Mammary epithelial cell (primary cell): ENCODE measurements at regions of chr2 and their contacts with region 1.

Region 1: DNA sequence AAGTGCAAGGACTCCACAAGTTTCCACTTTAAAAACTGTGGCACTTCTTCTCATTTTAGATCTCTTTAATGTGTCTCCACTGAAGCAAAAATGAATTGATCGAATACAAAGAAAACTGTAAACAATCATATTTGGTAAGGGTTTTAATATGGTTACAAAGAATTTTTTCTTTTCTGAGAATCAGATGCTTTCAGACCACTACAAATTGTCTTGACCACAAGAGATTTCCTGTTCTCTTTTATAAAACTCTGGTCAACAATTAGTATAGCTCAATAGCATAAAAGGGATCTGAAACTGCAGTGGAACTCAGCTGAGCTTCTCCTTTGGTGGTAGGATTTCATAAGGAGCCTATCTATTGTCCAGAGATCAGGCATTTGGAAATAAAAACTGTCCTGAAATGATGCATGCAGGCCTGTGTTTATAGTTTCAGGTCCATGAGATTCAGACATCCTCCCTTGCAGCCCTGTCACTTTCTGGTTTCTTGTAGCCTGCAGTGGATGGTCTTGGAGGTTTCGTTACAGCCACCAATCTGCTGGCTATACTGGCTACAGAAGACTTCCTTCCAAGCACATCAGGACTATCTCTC is 120.0 kb downstream of the DOCK10 start:
- DNase-seq: no peak
- H3K4me3 ChIP-seq: no peak overlapping the region
- H3K27ac ChIP-seq: no peak overlapping the region
- H3K4me1 ChIP-seq: peaks cover 7% of the 10 kb centered on the region
- H3K27me3 ChIP-seq: no peaks in the 10 kb centered on the region
- CTCF ChIP-seq: no peak

Region 2: GRCh38 chr2:224885836-224886547 is 36.2 kb before region 1 on chr2:
- CTCF ChIA-PET with region 1: interaction called, 5 read pairs
- dilution Hi-C with region 1: loop called (anchors 5 kb)
- in situ Hi-C with region 1: no loop called
- intact Hi-C with region 1: no loop called
- DNase-seq: peak; percentile 89
- H3K4me3 ChIP-seq: peak overlapping the region in 1 of 3 experiments; percentile 17
- H3K27ac ChIP-seq: peak overlapping the region; percentile 92
- H3K4me1 ChIP-seq: peaks cover 48% of the 10 kb centered on the region
- H3K27me3 ChIP-seq: no peaks in the 10 kb centered on the region
- CTCF ChIP-seq: no peak

Region 3: GRCh38 chr2:224909885-224910573 is 12.2 kb before region 1 on chr2:
- CTCF ChIA-PET with region 1: no interaction called
- dilution Hi-C with region 1: no loop called
- in situ Hi-C with region 1: no loop called
- intact Hi-C with region 1: loop called (anchors 1 kb)
- DNase-seq: peak; percentile 92
- H3K4me3 ChIP-seq: no peak overlapping the region
- H3K27ac ChIP-seq: peak overlapping the region; percentile 76
- H3K4me1 ChIP-seq: peaks cover 16% of the 10 kb centered on the region
- H3K27me3 ChIP-seq: no peaks in the 10 kb centered on the region
- CTCF ChIP-seq: no peak